Naive thymus-derived CD8-positive, alpha-beta T cell (primary cell): ENCODE measurements at regions of chr3 and their contacts with region 1.

Region 1: GRCh38 chr3:49093853-49094767 is at the start of gene QRICH1:
- DNase-seq: peak; percentile 89 to 100 (median 96)
- ATAC-seq: peak; percentile 81 to 82
- H3K4me3 Mint-ChIP-seq: peak within 1 kb of the TSS; percentile 93 to 99 (median 98)
- H3K27ac Mint-ChIP-seq: peak within 1 kb of the TSS; percentile 94 to 99 (median 98)
- H3K4me1 Mint-ChIP-seq: peaks cover 14 to 44% (median 36%) of the 10 kb centered on the region in 4 donors
- H3K27me3 Mint-ChIP-seq: no peaks in the 10 kb centered on the region
- polyA plus RNA-seq, gene QRICH1: 13.6 to 23.6 (median 21.1) TPM

Region 2: DNA sequence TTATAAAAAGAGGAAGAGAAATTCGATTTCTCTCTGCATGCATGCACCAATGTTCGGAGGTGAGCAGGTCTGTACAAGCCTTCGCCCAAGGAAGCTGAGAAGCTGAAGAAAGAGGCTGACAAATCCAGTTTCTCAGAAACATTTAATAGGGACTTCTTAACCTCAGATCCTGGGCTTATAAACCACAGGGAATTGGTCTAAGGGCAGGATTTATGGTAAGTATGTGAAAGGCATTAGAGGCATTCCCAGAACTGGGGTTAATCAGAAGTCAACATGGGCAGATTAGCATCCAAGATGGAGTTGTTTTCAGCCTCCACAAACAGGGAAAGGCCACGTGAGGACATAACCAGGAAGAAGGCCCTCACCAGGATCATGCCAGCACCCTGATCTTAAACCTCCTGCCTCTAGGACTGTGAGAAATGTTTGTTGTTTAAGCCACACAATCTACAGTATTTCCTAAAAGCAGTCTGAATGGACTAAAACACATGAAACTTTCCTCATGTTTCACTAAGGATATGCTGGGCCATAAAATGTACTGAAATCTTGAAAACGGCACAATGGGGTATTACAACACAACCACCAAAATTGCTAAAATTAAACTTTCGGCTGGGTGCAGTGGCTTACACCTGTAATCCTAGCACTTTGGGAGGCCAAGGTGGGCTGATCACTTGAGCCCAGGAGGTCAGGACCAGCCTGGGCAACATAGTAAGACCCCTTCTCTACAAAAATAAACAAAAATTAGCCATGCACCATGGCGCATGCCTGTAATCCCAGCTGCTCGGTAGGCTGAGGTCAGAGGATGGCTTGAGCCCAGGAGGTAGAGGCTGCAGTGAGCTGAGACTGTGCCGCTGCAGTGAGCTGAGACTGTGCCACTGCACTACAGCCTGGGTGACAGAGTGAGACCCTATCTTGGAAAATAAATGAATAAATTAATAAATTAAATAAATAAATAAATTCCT is 601.3 kb before region 1 on chr3:
- POLR2A ChIA-PET with region 1: no interaction called
- DNase-seq: no peak
- ATAC-seq: no peak
- H3K4me3 Mint-ChIP-seq: no peak overlapping the region
- H3K27ac Mint-ChIP-seq: peak overlapping the region in 1 of 10 donors; percentile 13
- H3K4me1 Mint-ChIP-seq: peaks cover 0 to 7% (median under 1%) of the 10 kb centered on the region in 4 donors
- H3K27me3 Mint-ChIP-seq: no peaks in the 10 kb centered on the region

Region 3: GRCh38 chr3:48756640-48757039 is 337.5 kb before region 1 on chr3:
- POLR2A ChIA-PET with region 1: no interaction called
- DNase-seq: no peak
- ATAC-seq: no peak
- H3K4me3 Mint-ChIP-seq: no peak overlapping the region
- H3K27ac Mint-ChIP-seq: peak overlapping the region in 1 of 10 donors; percentile 36
- H3K4me1 Mint-ChIP-seq: peaks cover 0 to 4% (median under 1%) of the 10 kb centered on the region in 4 donors
- H3K27me3 Mint-ChIP-seq: no peaks in the 10 kb centered on the region

Region 4: DNA sequence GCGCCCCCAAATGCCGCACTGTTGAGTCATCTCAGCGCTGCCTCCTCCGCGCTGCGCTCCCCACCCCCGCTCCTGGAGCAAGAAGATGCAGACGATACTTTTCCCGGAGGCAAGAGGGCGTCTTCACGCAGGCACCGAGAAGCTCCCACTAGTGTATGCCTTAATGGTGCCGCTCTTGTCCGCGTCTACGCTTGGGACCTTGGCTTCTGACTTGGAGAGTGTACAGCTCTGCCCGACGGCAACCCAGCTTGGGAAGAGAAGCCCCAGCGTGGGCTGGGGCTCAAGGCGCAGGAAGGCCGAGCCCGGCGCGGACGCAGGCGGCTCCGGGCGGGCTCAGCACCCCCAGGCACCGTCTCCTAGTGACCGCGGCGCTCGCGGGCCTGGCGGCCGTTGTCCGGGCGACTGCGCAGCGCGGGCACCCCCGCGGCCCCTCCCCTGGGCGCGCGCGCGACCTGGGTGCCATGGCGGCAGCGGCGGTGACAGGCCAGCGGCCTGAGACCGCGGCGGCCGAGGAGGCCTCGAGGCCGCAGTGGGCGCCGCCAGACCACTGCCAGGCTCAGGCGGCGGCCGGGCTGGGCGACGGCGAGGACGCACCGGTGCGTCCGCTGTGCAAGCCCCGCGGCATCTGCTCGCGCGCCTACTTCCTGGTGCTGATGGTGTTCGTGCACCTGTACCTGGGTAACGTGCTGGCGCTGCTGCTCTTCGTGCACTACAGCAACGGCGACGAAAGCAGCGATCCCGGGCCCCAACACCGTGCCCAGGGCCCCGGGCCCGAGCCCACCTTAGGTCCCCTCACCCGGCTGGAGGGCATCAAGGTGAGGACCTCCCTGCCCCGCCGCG is 104.1 kb before region 1 on chr3 and contains the start of gene P4HTM:
- POLR2A ChIA-PET with region 1: interaction called, 36 read pairs
- DNase-seq: peak; percentile 51 to 86 (median 62)
- ATAC-seq: peak; percentile 65 to 69
- H3K4me3 Mint-ChIP-seq: peak within 1 kb of the TSS; percentile 89 to 94 (median 92)
- H3K27ac Mint-ChIP-seq: peak within 1 kb of the TSS; percentile 90 to 96 (median 94)
- H3K4me1 Mint-ChIP-seq: peaks cover 21 to 54% (median 46%) of the 10 kb centered on the region in 4 donors
- H3K27me3 Mint-ChIP-seq: no peaks in the 10 kb centered on the region
- polyA plus RNA-seq, gene P4HTM: 20.3 to 23.3 (median 22.9) TPM

Region 5: DNA sequence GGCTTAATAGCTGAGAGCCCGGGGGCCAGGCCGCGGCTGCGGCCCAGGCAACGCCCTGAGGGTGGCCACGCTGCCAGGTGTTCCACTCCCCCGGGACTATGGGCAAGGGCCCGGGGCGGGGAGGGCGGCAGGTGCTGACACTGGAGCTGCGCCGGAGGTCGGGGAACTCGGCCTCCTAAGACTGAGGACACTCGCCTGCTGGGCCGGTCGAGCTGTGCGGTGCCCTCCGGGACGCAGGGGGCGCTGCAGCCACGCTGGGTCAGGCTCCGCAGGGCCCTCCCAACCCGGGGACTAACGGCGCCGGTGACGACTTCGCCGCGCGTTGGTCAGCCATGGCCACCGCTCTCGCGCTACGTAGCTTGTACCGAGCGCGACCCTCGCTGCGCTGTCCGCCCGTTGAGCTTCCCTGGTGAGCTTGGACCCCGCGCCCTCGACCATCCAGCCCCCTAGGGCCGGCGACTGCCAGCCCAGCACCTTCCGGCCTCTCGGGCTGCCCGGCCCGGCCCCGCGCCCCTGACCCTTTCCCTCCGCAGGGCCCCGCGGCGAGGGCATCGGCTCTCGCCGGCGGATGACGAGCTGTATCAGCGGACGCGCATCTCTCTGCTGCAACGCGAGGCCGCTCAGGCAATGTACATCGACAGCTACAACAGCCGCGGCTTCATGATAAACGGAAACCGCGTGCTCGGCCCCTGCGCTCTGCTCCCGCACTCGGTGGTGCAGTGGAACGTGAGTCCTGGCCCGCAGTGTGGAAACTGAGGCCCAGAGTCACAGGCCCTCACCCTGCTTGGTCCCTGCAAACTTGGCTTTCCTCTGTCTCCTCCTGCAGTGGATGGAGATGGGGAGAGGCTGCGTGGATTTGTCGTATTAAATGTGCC is 72.1 kb before region 1 on chr3 and contains the start of gene NDUFAF3:
- POLR2A ChIA-PET with region 1: interaction called, 60 read pairs
- DNase-seq: peak; percentile 81 to 93 (median 90)
- ATAC-seq: peak; percentile 77 to 83
- H3K4me3 Mint-ChIP-seq: peak within 1 kb of the TSS; percentile 90 to 99 (median 98)
- H3K27ac Mint-ChIP-seq: peak within 1 kb of the TSS; percentile 96 to 99 (median 98)
- H3K4me1 Mint-ChIP-seq: peaks cover 12 to 65% (median 52%) of the 10 kb centered on the region in 4 donors
- H3K27me3 Mint-ChIP-seq: peaks cover 0 to 1% (median 0%) of the 10 kb centered on the region in 5 donors
- polyA plus RNA-seq, gene NDUFAF3: 140 to 226 (median 202) TPM

Region 6: DNA sequence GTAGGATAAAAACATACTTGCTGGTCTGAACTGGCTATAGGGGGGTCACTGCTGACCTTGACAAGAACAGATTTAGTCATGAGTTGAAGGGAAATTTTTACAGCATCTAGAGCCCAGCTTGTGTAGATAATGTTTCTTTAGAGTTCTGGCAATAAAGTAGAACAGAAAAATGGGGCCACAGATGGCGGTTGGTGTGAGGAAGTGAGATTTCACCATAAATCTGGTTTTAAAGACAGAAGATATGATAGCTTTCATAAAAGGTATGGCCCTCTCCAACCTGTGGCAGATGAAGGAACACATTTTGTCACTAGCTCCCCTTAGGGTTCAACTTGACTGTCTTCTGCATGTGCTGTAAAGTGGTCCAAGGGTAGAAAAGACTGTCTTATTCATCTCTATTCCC is 40.6 kb before region 1 on chr3:
- POLR2A ChIA-PET with region 1: no interaction called
- DNase-seq: no peak
- ATAC-seq: no peak
- H3K4me3 Mint-ChIP-seq: no peak overlapping the region
- H3K27ac Mint-ChIP-seq: peak overlapping the region in 3 of 10 donors; percentile 16 to 57 (median 51)
- H3K4me1 Mint-ChIP-seq: peaks cover 9 to 32% (median 24%) of the 10 kb centered on the region in 4 donors
- H3K27me3 Mint-ChIP-seq: no peaks in the 10 kb centered on the region

Region 7: GRCh38 chr3:49104483-49105291 is 10.6 kb after region 1 on chr3 and contains the start of gene QARS1:
- POLR2A ChIA-PET with region 1: interaction called, 92 read pairs
- DNase-seq: peak; percentile 79 to 95 (median 86)
- ATAC-seq: peak; percentile 98 to 99
- H3K4me3 Mint-ChIP-seq: peak within 1 kb of the TSS; percentile 90 to 99 (median 96)
- H3K27ac Mint-ChIP-seq: peak within 1 kb of the TSS; percentile 96 to 99 (median 98)
- H3K4me1 Mint-ChIP-seq: peaks cover 11 to 43% (median 33%) of the 10 kb centered on the region in 4 donors
- H3K27me3 Mint-ChIP-seq: no peaks in the 10 kb centered on the region
- polyA plus RNA-seq, gene QARS1: 89.1 to 125 (median 94.8) TPM

Region 8: GRCh38 chr3:49158108-49158709 is 64.1 kb after region 1 on chr3:
- POLR2A ChIA-PET with region 1: interaction called, 10 read pairs
- DNase-seq: peak; percentile 23 to 81 (median 54)
- ATAC-seq: peak; percentile 92 to 95
- H3K4me3 Mint-ChIP-seq: no peak overlapping the region
- H3K27ac Mint-ChIP-seq: peak overlapping the region; percentile 0 to 87 (median 45)
- H3K4me1 Mint-ChIP-seq: peaks cover 0 to 22% (median 5%) of the 10 kb centered on the region in 4 donors
- H3K27me3 Mint-ChIP-seq: no peaks in the 10 kb centered on the region

Region 9: GRCh38 chr3:49199239-49199899 is 105.3 kb after region 1 on chr3:
- POLR2A ChIA-PET with region 1: no interaction called
- DNase-seq: no peak
- ATAC-seq: no peak
- H3K4me3 Mint-ChIP-seq: no peak overlapping the region
- H3K27ac Mint-ChIP-seq: peak overlapping the region in 1 of 10 donors; percentile 15
- H3K4me1 Mint-ChIP-seq: no peaks in the 10 kb centered on the region
- H3K27me3 Mint-ChIP-seq: peaks cover 7 to 27% (median 15%) of the 10 kb centered on the region in 5 donors

Region 10: DNA sequence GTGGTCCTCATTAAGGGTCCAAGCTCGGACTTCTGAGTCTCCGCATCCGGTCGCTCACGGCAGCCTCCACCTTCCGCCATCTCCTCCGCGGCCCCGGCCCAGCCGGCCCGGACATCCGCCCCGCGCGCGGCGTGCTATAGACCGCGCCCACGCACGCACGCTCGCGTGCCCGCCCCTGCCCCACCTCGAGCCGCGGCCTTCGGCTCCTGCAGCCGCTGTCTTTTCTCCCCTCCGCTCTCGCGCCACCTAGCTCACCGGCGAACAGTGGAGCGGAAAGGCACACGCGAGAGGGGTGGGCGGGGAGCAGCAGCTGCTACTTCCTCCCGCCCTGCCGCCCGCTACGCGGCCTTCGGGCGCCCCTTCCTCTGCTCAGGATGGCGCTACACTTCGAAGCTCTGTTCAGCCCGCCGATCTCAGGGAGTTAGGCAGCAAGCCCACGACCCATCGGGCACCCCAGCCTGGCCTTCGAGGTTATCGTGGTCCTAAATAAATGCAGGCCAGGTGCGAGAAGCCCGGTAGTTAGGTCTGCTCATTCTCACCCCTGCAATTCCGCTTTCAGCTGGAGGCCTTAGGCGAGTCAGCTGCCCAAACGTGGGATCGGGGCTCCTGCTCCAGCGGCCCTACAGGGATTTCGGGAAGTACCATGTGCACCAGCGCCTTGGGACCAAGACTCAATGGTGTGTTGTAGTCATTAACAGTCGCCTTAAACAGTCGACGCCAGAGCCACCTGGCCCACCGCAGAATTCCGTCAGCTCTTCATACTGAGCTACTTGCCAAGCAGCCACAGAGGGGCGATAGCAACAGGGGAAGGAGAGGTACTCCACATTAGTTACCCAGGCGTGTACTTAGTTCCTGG is 246.1 kb after region 1 on chr3 and contains the start of gene USP4:
- POLR2A ChIA-PET with region 1: interaction called, 25 read pairs
- DNase-seq: peak; percentile 81 to 96 (median 88)
- ATAC-seq: peak; percentile 87 to 89
- H3K4me3 Mint-ChIP-seq: peak within 1 kb of the TSS; percentile 82 to 99 (median 92)
- H3K27ac Mint-ChIP-seq: peak within 1 kb of the TSS; percentile 97 to 99 (median 98)
- H3K4me1 Mint-ChIP-seq: peaks cover 30 to 57% (median 45%) of the 10 kb centered on the region in 4 donors
- H3K27me3 Mint-ChIP-seq: no peaks in the 10 kb centered on the region
- polyA plus RNA-seq, gene USP4: 49.6 to 69.1 (median 50.6) TPM

Region 11: GRCh38 chr3:49428697-49429100 is 334.6 kb after region 1 on chr3:
- POLR2A ChIA-PET with region 1: interaction called, 13 read pairs
- DNase-seq: no peak
- ATAC-seq: peak; percentile 15
- H3K4me3 Mint-ChIP-seq: peak overlapping the region; percentile 90 to 96 (median 92)
- H3K27ac Mint-ChIP-seq: peak overlapping the region; percentile 88 to 98 (median 94)
- H3K4me1 Mint-ChIP-seq: peaks cover 12 to 29% (median 22%) of the 10 kb centered on the region in 4 donors
- H3K27me3 Mint-ChIP-seq: no peaks in the 10 kb centered on the region